Activated naive CD4-positive, alpha-beta T cell treated with anti-CD3 and anti-CD28 coated beads for 36 hours (primary cell): ENCODE measurements at regions of chr15 and their contacts with region 1.

Region 1: DNA sequence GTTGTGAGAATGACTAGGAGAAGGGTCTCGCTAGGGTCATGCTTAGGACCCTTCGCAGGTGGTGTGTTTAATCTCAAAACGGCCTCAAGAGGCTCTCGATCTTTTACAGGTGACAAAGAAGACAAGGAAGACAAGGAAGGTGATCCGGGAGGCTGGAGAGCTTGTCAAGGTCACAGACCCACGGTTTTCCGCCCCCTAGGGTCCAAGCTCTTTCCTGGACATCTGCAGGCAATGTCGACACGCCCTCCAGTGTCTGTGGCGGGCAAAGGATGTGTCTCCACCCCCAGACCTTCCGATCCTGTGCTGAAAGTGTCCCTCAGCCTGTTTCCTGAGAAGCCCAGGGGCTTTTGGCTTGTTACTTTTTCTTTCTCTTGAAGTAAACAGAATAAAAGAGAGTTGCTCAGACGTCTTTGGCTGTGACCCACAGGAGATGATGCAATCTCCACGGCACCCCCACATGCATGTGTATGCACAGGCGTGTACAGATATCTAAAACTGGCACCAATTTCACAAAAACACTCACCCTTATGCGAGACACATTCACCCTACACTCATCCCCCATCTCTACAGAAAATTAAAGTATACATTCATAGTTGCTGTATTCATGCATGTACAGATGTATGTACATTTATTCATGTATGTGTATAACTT is 108.8 kb downstream of the KLF13 start:
- DNase-seq: peak; percentile 93
- H3K4me3 Mint-ChIP-seq: peak overlapping the region; percentile 61
- H3K27ac Mint-ChIP-seq: peak overlapping the region; percentile 95
- H3K4me1 Mint-ChIP-seq: peaks cover 69% of the 10 kb centered on the region
- H3K27me3 Mint-ChIP-seq: no peaks in the 10 kb centered on the region

Region 2: GRCh38 chr15:30940359-30940758 is 495.0 kb before region 1 on chr15:
- CTCF ChIA-PET with region 1: no interaction called
- intact Hi-C with region 1: no loop called
- DNase-seq: no peak
- H3K4me3 Mint-ChIP-seq: no peak overlapping the region
- H3K27ac Mint-ChIP-seq: no peak overlapping the region
- H3K4me1 Mint-ChIP-seq: no peaks in the 10 kb centered on the region
- H3K27me3 Mint-ChIP-seq: no peaks in the 10 kb centered on the region

Region 3: GRCh38 chr15:30991255-30992072 is 443.9 kb before region 1 on chr15 and contains the start of gene MTMR10:
- CTCF ChIA-PET with region 1: no interaction called
- intact Hi-C with region 1: loop called (anchors 5 kb)
- DNase-seq: peak; percentile 65
- H3K4me3 Mint-ChIP-seq: peak within 1 kb of the TSS; percentile 92
- H3K27ac Mint-ChIP-seq: peak within 1 kb of the TSS; percentile 77
- H3K4me1 Mint-ChIP-seq: peaks cover 30% of the 10 kb centered on the region
- H3K27me3 Mint-ChIP-seq: no peaks in the 10 kb centered on the region
- total RNA-seq, gene MTMR10: 9.7 to 10.5 TPM

Region 4: DNA sequence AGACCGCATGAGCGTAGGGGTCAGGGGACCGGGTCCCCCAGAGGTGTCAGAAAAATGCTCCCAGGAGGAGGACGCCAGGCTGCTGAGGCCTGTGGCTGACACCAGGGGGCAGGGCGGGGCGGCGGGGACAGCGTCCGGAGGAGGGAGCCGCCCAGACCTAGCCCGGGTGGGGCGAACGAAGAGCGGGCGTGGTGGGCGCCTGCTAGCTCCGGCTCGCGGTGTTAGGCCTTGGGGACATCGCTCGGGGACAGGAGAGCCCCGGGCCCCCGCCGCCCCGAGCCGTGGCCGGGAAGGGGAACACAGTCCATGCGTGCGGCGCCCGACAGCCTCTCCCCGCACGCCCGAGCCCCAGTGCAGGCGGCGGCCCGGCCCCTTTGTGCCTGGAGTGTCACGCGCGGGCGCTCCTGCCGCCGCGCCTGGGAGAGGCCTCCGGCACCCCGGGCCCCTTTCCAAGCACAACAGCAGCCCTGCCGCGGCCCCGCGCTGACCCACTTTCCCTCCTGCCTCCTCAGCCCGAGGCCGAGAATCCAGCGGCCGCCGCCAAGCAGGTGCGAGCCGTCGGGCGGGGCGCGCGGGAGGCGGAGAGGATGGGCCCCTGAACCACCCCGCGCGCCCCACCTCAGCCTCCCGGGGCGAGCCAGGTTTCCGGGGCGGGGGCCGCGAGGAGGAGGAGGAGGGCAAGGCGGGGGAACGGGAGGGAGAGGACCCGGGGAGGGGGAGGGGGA is 219.7 kb before region 1 on chr15:
- CTCF ChIA-PET with region 1: interaction called, 58 read pairs
- intact Hi-C with region 1: loop called (anchors 1 kb)
- DNase-seq: peak; percentile 86
- H3K4me3 Mint-ChIP-seq: peak overlapping the region; percentile 62
- H3K27ac Mint-ChIP-seq: peak overlapping the region; percentile 66
- H3K4me1 Mint-ChIP-seq: peaks cover 9% of the 10 kb centered on the region
- H3K27me3 Mint-ChIP-seq: no peaks in the 10 kb centered on the region

Region 5: GRCh38 chr15:31326156-31326732 is 109.1 kb before region 1 on chr15:
- CTCF ChIA-PET with region 1: interaction called, 6 read pairs
- intact Hi-C with region 1: loop called (anchors 1 kb)
- DNase-seq: peak; percentile 99
- H3K4me3 Mint-ChIP-seq: peak overlapping the region; percentile 87
- H3K27ac Mint-ChIP-seq: peak overlapping the region; percentile 78
- H3K4me1 Mint-ChIP-seq: peaks cover 33% of the 10 kb centered on the region
- H3K27me3 Mint-ChIP-seq: no peaks in the 10 kb centered on the region

Region 6: GRCh38 chr15:31365655-31366127 is 69.7 kb before region 1 on chr15:
- CTCF ChIA-PET with region 1: interaction called, 165 read pairs
- intact Hi-C with region 1: loop called (anchors 1 kb)
- DNase-seq: peak; percentile 88
- H3K4me3 Mint-ChIP-seq: peak overlapping the region; percentile 74
- H3K27ac Mint-ChIP-seq: peak overlapping the region; percentile 99
- H3K4me1 Mint-ChIP-seq: peaks cover 97% of the 10 kb centered on the region
- H3K27me3 Mint-ChIP-seq: no peaks in the 10 kb centered on the region

Region 7: GRCh38 chr15:31458591-31459399 is 23.4 kb after region 1 on chr15:
- CTCF ChIA-PET with region 1: interaction called, 62 read pairs
- intact Hi-C with region 1: loop called (anchors 1 kb)
- DNase-seq: peak; percentile 86
- H3K4me3 Mint-ChIP-seq: peak overlapping the region; percentile 57
- H3K27ac Mint-ChIP-seq: peak overlapping the region; percentile 87
- H3K4me1 Mint-ChIP-seq: peaks cover 37% of the 10 kb centered on the region
- H3K27me3 Mint-ChIP-seq: no peaks in the 10 kb centered on the region

Region 8: DNA sequence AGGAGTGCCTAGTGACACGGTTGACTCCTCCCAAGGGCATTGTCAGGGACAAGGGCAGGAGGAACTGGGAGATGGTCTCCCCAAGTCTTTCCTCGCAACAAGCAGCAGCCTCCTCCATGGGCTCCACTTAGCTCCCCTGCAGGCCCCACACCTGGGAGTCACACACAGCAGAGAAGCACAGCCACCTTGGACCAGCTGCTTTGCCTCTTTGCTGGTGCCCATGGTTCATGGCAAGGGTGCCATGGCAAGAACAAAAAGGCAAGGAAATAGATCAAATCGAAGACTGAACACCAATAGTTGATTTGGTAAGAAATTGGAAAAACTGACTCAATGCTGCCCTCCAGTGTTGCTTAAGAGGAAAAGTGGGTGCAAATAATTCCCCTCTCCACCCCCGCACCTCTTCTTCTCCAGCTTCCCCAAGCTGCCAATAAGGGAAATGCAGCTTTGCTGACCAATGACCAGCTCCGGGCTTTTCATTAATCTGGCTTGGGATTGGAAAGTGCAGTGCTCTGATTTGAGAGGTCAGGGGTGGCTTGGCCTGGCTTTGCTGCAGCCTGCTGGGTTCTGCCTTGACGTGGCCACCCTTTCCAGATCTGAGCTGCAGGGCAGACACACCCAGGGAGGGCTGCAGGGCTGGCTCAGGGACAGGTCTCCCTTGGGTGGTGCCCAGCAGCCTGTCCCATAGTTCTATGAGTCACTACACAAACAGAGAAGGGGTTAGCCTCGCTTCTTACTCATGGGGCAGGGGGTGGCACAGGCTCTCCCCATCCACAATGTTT is 53.2 kb after region 1 on chr15:
- CTCF ChIA-PET with region 1: interaction called, 348 read pairs
- intact Hi-C with region 1: loop called (anchors 1 kb)
- DNase-seq: peak; percentile 57
- H3K4me3 Mint-ChIP-seq: no peak overlapping the region
- H3K27ac Mint-ChIP-seq: no peak overlapping the region
- H3K4me1 Mint-ChIP-seq: peaks cover 23% of the 10 kb centered on the region
- H3K27me3 Mint-ChIP-seq: no peaks in the 10 kb centered on the region